ENCODE measurements at regions of chrX and their contacts with region 1.

Region 1: GRCh38 chrX:22985958-22986357 is 13.8 kb upstream of the DDX53 start:
- DNase-seq: no peak
- ATAC-seq: no peak
- H3K4me3 ChIP-seq: no peak overlapping the region
- H3K27ac ChIP-seq: no peak overlapping the region
- H3K4me1 ChIP-seq: no peaks in the 10 kb centered on the region
- H3K27me3 ChIP-seq: no peaks in the 10 kb centered on the region
- CTCF ChIP-seq: no peak
- POLR2A ChIP-seq: no peak
- RAD21 ChIP-seq: no peak

Region 2: GRCh38 chrX:22999696-23000223 is 13.8 kb after region 1 on chrX and contains the start of gene DDX53:
- CTCF ChIA-PET with region 1: no interaction called
- POLR2A ChIA-PET with region 1: interaction called, 11 read pairs
- dilution Hi-C with region 1: no loop called
- in situ Hi-C with region 1: no loop called
- intact Hi-C with region 1: no loop called
- DNase-seq: no peak
- ATAC-seq: no peak
- H3K4me3 ChIP-seq: no peak within 1 kb of the TSS
- H3K27ac ChIP-seq: no peak within 1 kb of the TSS
- H3K4me1 ChIP-seq: no peaks in the 10 kb centered on the region
- H3K27me3 ChIP-seq: no peaks in the 10 kb centered on the region
- CTCF ChIP-seq: no peak
- POLR2A ChIP-seq: no peak
- RAD21 ChIP-seq: no peak
- total RNA-seq, gene DDX53: not detected in 2 replicates

Region 3: DNA sequence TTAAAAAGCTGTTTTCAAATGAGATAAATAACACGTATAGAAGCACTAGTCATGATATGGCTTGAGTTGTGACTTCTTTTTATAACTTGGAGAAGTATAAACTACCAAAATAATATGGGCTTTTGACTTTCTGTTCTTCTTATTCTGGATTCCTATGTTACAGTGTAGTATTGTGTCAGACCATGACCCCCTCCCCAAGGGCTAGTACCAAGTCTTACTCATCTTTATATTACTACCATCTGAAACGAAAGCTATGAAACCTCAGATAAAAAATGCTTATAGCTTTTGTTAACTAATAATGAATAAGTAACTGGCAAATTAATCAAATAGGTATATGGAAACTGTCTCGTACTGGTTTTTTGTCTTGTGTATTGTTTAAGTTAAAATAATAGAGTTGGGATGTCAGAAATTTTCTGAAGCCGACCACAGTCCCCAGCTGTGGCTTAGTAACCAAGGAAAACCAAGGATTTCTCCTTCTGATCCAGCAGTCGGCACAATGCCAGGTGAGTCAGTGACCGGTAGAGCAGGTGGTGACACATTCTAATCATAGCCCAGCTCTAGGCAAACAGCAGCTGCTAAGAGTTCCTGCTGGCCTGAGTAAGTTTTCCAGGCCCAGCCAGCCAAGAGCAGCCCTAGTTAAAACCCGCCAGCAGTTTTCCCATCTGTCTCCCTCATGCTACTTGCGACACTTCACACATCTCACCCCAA is 518.0 kb after region 1 on chrX:
- CTCF ChIA-PET with region 1: no interaction called
- POLR2A ChIA-PET with region 1: no interaction called
- dilution Hi-C with region 1: no loop called
- in situ Hi-C with region 1: no loop called
- intact Hi-C with region 1: no loop called
- DNase-seq: peak; percentile 66
- ATAC-seq: no peak
- H3K4me3 ChIP-seq: no peak overlapping the region
- H3K27ac ChIP-seq: no peak overlapping the region
- H3K4me1 ChIP-seq: no peaks in the 10 kb centered on the region
- H3K27me3 ChIP-seq: no peaks in the 10 kb centered on the region
- CTCF ChIP-seq: no peak
- POLR2A ChIP-seq: no peak
- RAD21 ChIP-seq: no peak